OCI-LY7 (cell line): ENCODE measurements at regions of chr3 and their contacts with region 1.

Region 1: DNA sequence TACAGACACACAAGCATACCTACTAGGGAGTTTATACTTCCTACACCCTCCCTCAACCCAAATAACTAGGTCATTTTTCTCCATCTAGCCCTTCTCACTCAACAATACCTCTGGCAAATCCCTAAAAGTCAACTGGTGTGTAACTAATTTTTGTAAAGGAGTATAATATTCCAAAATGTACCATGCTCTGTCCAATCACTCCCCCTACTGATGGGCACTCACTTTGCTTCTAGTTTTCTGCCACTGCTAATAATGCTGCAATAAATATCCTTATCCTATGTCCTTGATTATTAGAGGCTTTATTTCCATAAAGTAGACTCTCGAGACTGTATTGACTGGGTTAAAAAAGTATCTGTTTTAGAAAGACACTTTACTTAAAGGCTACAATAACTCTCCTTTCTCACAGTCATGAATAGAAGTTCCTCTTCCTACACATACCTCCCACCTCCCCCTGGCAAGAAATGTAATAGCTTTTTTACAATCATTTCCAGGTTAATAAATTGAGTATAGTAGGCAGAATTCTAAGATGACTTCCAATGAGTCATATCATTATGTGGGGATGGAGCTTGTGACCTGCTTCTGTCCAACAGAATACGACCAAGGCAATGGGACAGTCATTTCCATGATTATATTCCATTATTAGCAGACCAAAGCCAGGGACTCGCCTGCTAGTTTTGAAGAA is 30.0 kb downstream of the SHQ1 start:
- DNase-seq: peak; percentile 22
- H3K4me3 ChIP-seq: no peak overlapping the region
- H3K27ac ChIP-seq: no peak overlapping the region
- H3K4me1 ChIP-seq: peaks cover 55% of the 10 kb centered on the region
- CTCF ChIP-seq: peak; percentile 85

Region 2: DNA sequence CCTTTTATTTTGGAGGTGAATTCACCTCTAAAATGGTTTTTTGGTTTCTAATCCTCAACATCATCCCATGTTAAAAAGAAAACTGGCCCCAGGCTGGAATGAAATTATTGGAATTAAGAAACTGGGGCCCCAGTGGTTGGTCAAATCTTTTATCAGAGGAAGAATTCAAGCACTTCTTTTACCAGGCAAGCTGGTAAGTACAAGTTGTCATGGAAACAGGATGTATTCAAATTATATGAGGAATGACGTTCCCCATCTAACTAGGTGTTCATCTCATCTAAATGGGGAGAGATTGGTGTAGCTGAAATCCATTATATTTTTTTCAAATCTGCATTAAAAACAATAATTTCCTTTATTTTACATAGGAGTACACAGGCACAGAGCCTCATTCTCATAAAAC is 1083.3 kb before region 1 on chr3:
- CTCF ChIA-PET with region 1: no interaction called
- POLR2A ChIA-PET with region 1: interaction called, 4 read pairs
- intact Hi-C with region 1: loop called (anchors 5 kb)
- DNase-seq: no peak
- H3K4me3 ChIP-seq: no peak overlapping the region
- H3K27ac ChIP-seq: no peak overlapping the region
- H3K4me1 ChIP-seq: no peaks in the 10 kb centered on the region
- CTCF ChIP-seq: no peak

Region 3: DNA sequence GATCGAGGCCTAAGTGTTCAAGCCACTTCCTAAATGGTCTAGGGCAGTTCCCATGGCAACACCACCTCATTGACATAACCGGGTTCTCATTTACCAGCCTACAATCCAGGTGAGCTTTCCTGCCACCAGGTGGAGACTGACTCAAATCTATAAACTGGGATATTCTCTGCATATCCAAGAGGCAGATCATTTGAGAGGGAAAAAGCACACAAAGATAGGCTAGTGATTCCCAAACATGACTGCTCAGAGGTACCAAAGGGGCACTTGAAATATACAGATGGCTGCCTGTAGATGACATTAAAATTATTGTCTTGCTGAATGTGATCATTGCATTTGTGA is 892.0 kb before region 1 on chr3:
- CTCF ChIA-PET with region 1: no interaction called
- POLR2A ChIA-PET with region 1: interaction called, 3 read pairs
- intact Hi-C with region 1: loop called (anchors 2 kb)
- DNase-seq: peak; percentile 59
- H3K4me3 ChIP-seq: no peak overlapping the region
- H3K27ac ChIP-seq: no peak overlapping the region
- H3K4me1 ChIP-seq: peaks cover 6% of the 10 kb centered on the region
- CTCF ChIP-seq: peak; percentile 77

Region 4: GRCh38 chr3:72439321-72440183 is 378.7 kb before region 1 on chr3:
- CTCF ChIA-PET with region 1: no interaction called
- POLR2A ChIA-PET with region 1: no interaction called
- intact Hi-C with region 1: loop called (anchors 5 kb)
- DNase-seq: peak; percentile 37
- H3K4me3 ChIP-seq: peak overlapping the region; percentile 43
- H3K27ac ChIP-seq: peak overlapping the region; percentile 31
- H3K4me1 ChIP-seq: peaks cover 58% of the 10 kb centered on the region
- CTCF ChIP-seq: no peak

Region 5: GRCh38 chr3:72665701-72666443 is 152.4 kb before region 1 on chr3:
- CTCF ChIA-PET with region 1: interaction called, 9 read pairs
- POLR2A ChIA-PET with region 1: interaction called, 11 read pairs
- intact Hi-C with region 1: loop called (anchors 1 kb)
- DNase-seq: peak; percentile 67
- H3K4me3 ChIP-seq: no peak overlapping the region
- H3K27ac ChIP-seq: no peak overlapping the region
- H3K4me1 ChIP-seq: no peaks in the 10 kb centered on the region
- CTCF ChIP-seq: peak; percentile 88